ENCODE measurements at regions of chr1 and their contacts with region 1.

Region 1: GRCh38 chr1:40315239-40315794 is 1.8 kb downstream of the COL9A2 start:
- DNase-seq: peak; percentile 65 to 86 (median 76)
- ATAC-seq: peak; percentile 73 to 91 (median 87)
- H3K4me3 ChIP-seq: peak overlapping the region in 3 of 4 donors; percentile 18 to 56 (median 40)
- H3K27ac ChIP-seq: no peak overlapping the region
- H3K4me1 ChIP-seq: no peaks in the 10 kb centered on the region
- H3K27me3 ChIP-seq: peaks cover 0 to 10% (median 0%) of the 10 kb centered on the region in 4 donors
- CTCF ChIP-seq: peak; percentile 81 to 89 (median 85)

Region 2: DNA sequence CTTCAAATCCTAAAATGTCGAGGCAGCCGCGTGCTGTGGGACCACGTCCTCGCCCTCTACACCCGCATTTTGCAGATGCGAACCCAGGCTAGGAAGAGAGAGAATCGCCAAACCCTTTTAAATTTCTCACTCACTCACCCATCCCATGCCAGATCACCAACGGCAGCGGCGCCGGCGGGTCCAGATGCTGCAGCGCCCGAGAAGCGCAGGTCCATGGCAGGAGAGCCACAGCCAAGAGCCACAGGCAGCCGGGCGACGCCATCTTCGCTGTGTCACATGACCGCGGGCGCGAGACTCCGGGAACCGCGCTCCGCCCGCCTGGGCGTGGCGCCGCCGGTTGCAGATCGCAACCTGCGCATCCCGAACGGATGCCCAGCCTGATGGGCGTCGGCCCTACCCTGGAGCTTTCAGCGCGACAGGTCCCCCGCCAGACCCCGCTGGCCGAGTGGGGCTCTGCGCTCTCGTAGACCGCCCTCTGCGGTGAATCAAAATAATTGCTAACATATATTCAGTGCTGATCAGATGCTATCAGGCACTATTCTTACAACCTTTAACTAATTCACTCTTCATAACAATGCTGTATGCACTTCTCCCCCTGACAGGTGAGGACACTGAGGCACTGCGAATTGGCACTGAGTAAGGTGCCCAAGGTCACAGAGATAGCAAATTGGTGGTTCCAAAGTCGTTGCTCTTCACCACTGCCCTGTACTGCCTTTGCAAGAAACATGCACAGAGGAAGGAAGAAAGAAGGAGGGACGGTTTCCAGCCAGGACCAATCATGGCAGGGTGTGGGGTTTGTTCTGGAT is 218.1 kb before region 1 on chr1 and contains the start of gene PPT1:
- intact Hi-C with region 1: no loop called
- DNase-seq: peak; percentile 54 to 91 (median 76)
- ATAC-seq: peak; percentile 97 to 100 (median 98)
- H3K4me3 ChIP-seq: peak within 1 kb of the TSS; percentile 30 to 70 (median 46)
- H3K27ac ChIP-seq: peak within 1 kb of the TSS in 3 of 4 donors; percentile 3 to 32 (median 8)
- H3K4me1 ChIP-seq: peaks cover 0 to 3% (median 0%) of the 10 kb centered on the region in 3 donors
- H3K27me3 ChIP-seq: no peaks in the 10 kb centered on the region
- CTCF ChIP-seq: no peak
- total RNA-seq, gene PPT1: 20.1 to 74.1 (median 32.2) TPM

Region 3: GRCh38 chr1:40232444-40232843 is 82.9 kb before region 1 on chr1:
- intact Hi-C with region 1: loop called in 1 of 3 experiments (anchors 10 kb)
- DNase-seq: no peak
- ATAC-seq: no peak
- H3K4me3 ChIP-seq: no peak overlapping the region
- H3K27ac ChIP-seq: no peak overlapping the region
- H3K4me1 ChIP-seq: no peaks in the 10 kb centered on the region
- H3K27me3 ChIP-seq: no peaks in the 10 kb centered on the region
- CTCF ChIP-seq: no peak

Region 4: GRCh38 chr1:40247655-40248054 is 67.7 kb before region 1 on chr1 and contains the start of gene TMCO2:
- intact Hi-C with region 1: no loop called
- DNase-seq: no peak
- ATAC-seq: peak in 1 of 4 donors; percentile 57
- H3K4me3 ChIP-seq: no peak within 1 kb of the TSS
- H3K27ac ChIP-seq: no peak within 1 kb of the TSS
- H3K4me1 ChIP-seq: no peaks in the 10 kb centered on the region
- H3K27me3 ChIP-seq: no peaks in the 10 kb centered on the region
- CTCF ChIP-seq: no peak
- total RNA-seq, gene TMCO2: not detected

Region 5: DNA sequence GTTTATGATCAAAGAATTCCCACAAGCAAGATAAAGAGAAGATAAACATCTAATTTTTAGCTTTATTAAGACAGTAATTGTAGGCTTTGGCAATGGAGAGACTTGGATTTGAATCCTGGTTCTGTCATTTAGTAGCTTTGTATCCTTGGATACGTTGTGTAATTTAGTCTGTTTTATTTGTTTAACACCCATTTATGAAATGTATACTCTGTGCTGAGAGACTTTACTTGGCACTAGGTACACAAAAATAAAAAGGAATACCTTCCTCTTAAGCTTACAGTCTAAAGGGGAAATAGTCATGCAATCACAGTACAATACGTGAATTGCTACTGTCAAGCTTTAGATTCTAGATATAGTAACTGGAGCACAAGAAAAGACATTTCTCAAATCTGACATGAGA is 33.5 kb before region 1 on chr1:
- intact Hi-C with region 1: no loop called
- DNase-seq: no peak
- ATAC-seq: peak in 1 of 4 donors; percentile 14
- H3K4me3 ChIP-seq: no peak overlapping the region
- H3K27ac ChIP-seq: no peak overlapping the region
- H3K4me1 ChIP-seq: no peaks in the 10 kb centered on the region
- H3K27me3 ChIP-seq: no peaks in the 10 kb centered on the region
- CTCF ChIP-seq: no peak